H1 (cell line): ENCODE measurements at regions of chr9 and their contacts with region 1.

Region 1: DNA sequence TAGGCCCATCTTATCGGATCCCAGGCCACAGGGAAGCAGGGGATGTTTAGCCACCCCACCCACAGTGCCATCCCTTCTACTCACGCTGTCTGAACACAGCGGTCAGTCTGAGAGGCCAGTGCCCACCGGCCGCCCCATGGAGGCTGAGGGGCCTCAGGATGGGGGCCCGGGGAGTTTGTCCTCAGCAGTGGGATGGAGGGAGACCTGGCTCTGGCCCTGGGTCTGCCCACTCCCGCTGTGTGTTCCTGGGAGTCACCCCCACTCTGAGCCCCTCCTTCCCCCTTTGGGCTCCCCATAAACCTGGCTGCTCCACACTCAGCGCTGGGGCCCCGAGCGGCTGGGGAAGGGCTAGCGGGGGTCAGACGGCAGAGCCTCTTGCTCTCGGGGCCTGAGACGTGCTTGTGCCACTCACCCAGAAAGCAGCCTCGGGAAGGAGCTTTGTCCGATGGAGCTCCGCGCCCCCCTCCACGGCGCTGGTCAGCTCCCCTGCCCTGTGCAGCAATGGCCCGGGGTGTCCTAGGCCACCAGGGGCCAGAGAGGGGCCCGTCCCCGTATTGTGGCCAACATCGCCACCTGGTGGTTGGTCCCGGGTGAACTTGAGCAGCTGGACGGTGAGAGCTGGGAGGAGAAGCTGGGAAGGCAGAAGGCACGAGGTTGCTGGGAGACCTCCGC is 10.9 kb upstream of the LAMC3 start:
- DNase-seq: peak; percentile 67 to 99
- H3K4me3 ChIP-seq: no peak overlapping the region
- H3K27ac ChIP-seq: no peak overlapping the region
- H3K4me1 ChIP-seq: peaks cover 0 to 6% (median 1%) of the 10 kb centered on the region in 4 experiments; a peak in 3 of 7 replicates
- H3K27me3 ChIP-seq: peaks cover 0 to 9% (median 4%) of the 10 kb centered on the region in 4 experiments; a peak in 3 of 7 replicates
- CTCF ChIP-seq: peak in 2 of 3 experiments; percentile 96 to 99; a peak in 3 of 4 replicates
- EP300 ChIP-seq: no peak
- POLR2A ChIP-seq: no peak
- RAD21 ChIP-seq: peak; percentile 95 to 97

Region 2: GRCh38 chr9:130701056-130702022 is 296.7 kb before region 1 on chr9:
- CTCF ChIA-PET with region 1: interaction called, 26 read pairs
- POLR2A ChIA-PET with region 1: no interaction called
- DNase-seq: peak in 1 of 2 experiments; percentile 93
- H3K4me3 ChIP-seq: no peak overlapping the region
- H3K27ac ChIP-seq: 0 out of 2 replicates have a peak overlapping the region, but pooled peaks have one; percentile 2
- H3K4me1 ChIP-seq: no peaks in the 10 kb centered on the region; a peak in 1 of 7 replicates
- H3K27me3 ChIP-seq: no peaks in the 10 kb centered on the region
- CTCF ChIP-seq: peak; percentile 87 to 98 (median 97)
- EP300 ChIP-seq: no peak
- POLR2A ChIP-seq: no peak
- RAD21 ChIP-seq: peak; percentile 75 to 79

Region 3: DNA sequence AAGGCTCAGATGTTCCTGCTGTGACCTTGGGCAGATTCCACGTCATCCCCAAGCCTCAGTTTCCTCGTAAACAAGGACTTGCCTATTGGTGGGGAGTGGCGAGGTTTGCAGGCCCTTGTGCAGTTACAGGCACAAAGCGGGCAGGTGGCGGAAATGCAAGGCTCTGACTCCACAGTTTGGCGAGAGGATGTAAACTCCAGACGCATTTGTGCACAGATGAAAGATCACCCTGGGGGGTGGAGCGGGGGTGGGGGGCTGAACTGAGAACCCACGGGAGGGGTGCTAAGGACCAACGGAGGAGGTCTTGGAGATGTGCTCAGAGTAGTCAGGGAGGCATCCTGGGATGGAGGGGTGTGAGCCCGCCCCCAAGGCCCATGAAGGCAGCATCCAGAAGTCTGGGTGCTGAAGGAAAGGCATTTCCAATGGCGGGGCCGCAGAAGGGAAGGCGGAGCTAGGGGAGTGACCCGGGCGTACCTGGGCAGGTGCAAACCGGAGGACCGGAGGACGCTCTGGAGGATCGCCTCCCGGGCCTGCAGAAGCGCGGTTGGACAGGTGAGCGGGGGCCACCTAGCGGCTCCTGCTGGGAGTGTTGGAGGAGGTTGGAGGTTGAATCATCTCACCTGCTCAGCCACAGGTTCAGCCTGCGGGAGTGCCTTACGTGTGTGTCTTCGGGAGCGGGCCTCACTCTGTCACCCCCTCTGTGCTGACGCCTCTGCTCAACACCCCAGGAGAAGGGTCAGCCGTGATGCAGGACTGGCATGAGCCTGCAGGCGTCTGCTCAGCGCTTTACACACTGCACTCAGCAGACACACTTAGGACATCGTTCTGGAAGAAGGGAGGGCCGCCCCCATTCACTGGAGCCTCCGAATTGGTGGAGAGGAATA is 57.1 kb before region 1 on chr9:
- CTCF ChIA-PET with region 1: interaction called, 69 read pairs
- POLR2A ChIA-PET with region 1: interaction called, 3 read pairs
- DNase-seq: peak; percentile 85 to 99
- H3K4me3 ChIP-seq: peak overlapping the region in 1 of 4 experiments; percentile 96; a peak in 3 of 8 replicates
- H3K27ac ChIP-seq: no peak overlapping the region
- H3K4me1 ChIP-seq: peaks cover 8 to 34% (median 15%) of the 10 kb centered on the region in 4 experiments
- H3K27me3 ChIP-seq: peaks cover 18 to 44% (median 32%) of the 10 kb centered on the region in 4 experiments
- CTCF ChIP-seq: peak in 2 of 3 experiments; percentile 90 to 97; a peak in 3 of 4 replicates
- EP300 ChIP-seq: no peak
- POLR2A ChIP-seq: no peak
- RAD21 ChIP-seq: peak; percentile 87 to 88

Region 4: GRCh38 chr9:130981756-130982137 is 16.3 kb before region 1 on chr9:
- CTCF ChIA-PET with region 1: interaction called, 28 read pairs
- POLR2A ChIA-PET with region 1: no interaction called
- DNase-seq: no peak
- H3K4me3 ChIP-seq: no peak overlapping the region
- H3K27ac ChIP-seq: no peak overlapping the region
- H3K4me1 ChIP-seq: peaks cover 0 to 3% (median 0%) of the 10 kb centered on the region in 4 experiments; a peak in 1 of 7 replicates
- H3K27me3 ChIP-seq: no peaks in the 10 kb centered on the region
- CTCF ChIP-seq: no peak
- EP300 ChIP-seq: no peak
- POLR2A ChIP-seq: no peak
- RAD21 ChIP-seq: no peak

Region 5: DNA sequence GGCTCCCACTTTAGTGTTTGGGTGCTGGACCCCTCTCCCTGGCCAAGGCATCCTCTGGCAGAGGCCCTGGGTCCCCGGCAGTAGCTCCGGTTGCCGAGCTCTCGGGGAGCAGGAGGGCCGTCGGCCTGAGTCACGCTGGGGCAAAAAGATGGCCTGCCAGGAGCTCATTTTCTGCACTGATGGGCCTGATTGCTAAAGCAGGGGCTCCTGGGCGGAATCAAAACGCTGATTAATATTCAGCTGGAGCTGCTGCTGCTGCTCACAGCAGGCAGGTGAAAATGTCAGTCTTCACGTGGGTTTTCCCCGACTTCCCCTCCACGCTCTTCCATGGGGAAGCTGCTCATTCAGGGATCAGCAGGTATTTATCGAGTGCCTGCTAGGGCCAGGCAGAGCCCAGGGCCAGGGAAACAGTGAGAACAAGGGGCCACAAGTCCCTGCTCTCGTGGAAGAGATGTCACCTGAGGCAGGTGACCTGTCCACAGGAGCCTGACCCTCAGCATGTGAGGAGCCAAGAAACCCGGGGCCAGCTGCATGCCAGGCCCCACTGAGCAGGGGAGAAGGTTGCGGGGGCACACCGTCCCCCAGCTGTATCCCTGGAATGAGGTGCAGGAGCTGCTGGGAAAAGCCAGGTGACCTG is 33.1 kb after region 1 on chr9:
- CTCF ChIA-PET with region 1: interaction called, 13 read pairs
- POLR2A ChIA-PET with region 1: no interaction called
- DNase-seq: no peak
- H3K4me3 ChIP-seq: no peak overlapping the region
- H3K27ac ChIP-seq: no peak overlapping the region
- H3K4me1 ChIP-seq: no peaks in the 10 kb centered on the region
- H3K27me3 ChIP-seq: no peaks in the 10 kb centered on the region
- CTCF ChIP-seq: no peak
- EP300 ChIP-seq: no peak
- POLR2A ChIP-seq: no peak
- RAD21 ChIP-seq: no peak

Region 6: DNA sequence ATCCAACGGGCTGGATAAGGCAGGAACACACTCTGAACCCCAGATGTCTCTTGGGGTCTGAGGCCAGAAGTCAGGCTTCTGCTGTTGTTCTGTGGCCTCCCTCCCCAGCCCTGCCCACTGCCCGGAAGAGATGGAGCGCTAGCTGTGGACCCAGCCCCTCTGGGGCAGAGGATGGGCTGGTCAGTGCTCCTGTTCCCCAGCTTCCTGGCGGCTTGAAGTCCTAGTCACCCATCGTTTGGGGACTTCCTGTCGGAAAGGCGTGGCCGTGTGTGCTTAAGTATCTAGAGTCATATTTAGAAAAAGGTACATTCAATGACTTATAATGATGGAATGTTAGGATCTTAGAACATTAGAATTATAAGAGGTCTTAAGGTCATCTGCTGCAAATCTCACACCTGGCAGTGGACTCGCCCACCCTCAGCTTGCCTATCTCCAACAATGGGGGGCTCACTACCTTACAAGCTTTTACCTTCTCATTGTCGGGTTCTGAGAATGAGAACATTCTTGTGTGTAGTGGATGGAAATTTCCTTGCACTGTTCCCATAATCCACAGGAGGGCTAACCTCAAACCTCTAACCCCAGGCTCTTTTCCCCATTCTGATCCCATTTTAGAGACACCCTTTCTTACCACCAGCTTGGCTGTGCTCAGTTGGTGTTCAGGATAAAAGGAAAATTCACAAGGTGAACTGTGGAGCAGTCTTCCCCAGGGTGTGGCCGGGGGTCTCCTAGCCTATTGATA is 84.9 kb after region 1 on chr9:
- CTCF ChIA-PET with region 1: no interaction called
- POLR2A ChIA-PET with region 1: no interaction called
- DNase-seq: no peak
- H3K4me3 ChIP-seq: no peak overlapping the region
- H3K27ac ChIP-seq: no peak overlapping the region
- H3K4me1 ChIP-seq: no peaks in the 10 kb centered on the region; a peak in 1 of 7 replicates
- H3K27me3 ChIP-seq: no peaks in the 10 kb centered on the region; a peak in 1 of 7 replicates
- CTCF ChIP-seq: no peak
- EP300 ChIP-seq: no peak
- POLR2A ChIP-seq: no peak
- RAD21 ChIP-seq: no peak